Ovary (tissue), 10 donors: ENCODE measurements at regions of chr13 and their contacts with region 1.

Region 1: GRCh38 chr13:99093997-99094396 is 106.7 kb upstream of the UBAC2 start:
- DNase-seq: no peak
- H3K4me3 ChIP-seq: no peak overlapping the region
- H3K27ac ChIP-seq: no peak overlapping the region
- H3K4me1 ChIP-seq: no peaks in the 10 kb centered on the region
- H3K27me3 ChIP-seq: no peaks in the 10 kb centered on the region
- CTCF ChIP-seq: no peak
- EP300 ChIP-seq: no peak
- POLR2A ChIP-seq: no peak

Region 2: GRCh38 chr13:99140841-99141240 is 46.8 kb after region 1 on chr13:
- intact Hi-C with region 1: loop called in 1 of 4 experiments (anchors 1 kb)
- DNase-seq: no peak
- H3K4me3 ChIP-seq: no peak overlapping the region
- H3K27ac ChIP-seq: no peak overlapping the region
- H3K4me1 ChIP-seq: no peaks in the 10 kb centered on the region
- H3K27me3 ChIP-seq: no peaks in the 10 kb centered on the region
- CTCF ChIP-seq: no peak
- EP300 ChIP-seq: no peak
- POLR2A ChIP-seq: no peak